Ovary (tissue), 10 donors: ENCODE measurements at regions of chr11 and their contacts with region 1.

Region 1: DNA sequence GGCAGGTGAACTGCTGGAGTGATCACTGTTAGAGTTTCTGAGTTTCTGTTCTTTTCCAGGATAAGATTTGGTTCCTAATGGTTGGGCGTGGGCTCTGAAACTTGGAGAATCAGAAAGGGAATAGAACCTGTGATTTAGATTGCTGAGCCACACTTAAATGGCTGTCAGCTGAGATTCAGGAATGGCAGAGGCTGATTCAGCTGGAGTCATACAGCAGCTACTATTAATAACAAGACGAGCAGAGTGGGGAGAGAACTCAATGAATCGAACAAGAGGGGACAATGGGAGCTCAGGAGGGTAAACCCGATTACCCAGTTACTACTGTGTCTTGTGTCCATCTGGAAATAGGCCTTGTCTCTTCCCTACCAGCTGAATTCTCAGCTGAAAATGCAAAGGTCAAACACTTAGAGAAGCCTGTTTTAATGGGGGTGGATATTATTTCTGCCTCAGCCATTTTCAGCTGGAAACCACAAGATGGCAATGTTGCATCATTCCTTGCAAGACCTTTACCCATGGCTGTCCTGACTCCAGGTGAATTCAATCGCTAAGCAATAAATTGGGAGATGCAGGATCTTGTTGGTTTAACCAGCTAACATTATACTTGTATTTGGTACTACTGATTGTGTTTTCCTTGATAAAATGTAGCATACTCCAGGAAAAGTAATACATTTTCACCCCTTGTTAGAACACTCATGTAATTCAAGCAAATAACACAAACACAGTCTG is 104.5 kb upstream of the RAG2 start:
- DNase-seq: peak in 2 of 5 donors; percentile 16
- H3K4me3 ChIP-seq: no peak overlapping the region
- H3K27ac ChIP-seq: no peak overlapping the region
- H3K4me1 ChIP-seq: no peaks in the 10 kb centered on the region
- H3K27me3 ChIP-seq: no peaks in the 10 kb centered on the region
- CTCF ChIP-seq: peak; percentile 48 to 77 (median 77)
- EP300 ChIP-seq: no peak
- POLR2A ChIP-seq: no peak

Region 2: GRCh38 chr11:36746886-36747710 is 44.6 kb after region 1 on chr11:
- intact Hi-C with region 1: loop called in 1 of 4 experiments (anchors 5 kb)
- DNase-seq: peak; percentile 62 to 83 (median 77)
- H3K4me3 ChIP-seq: no peak overlapping the region
- H3K27ac ChIP-seq: no peak overlapping the region
- H3K4me1 ChIP-seq: no peaks in the 10 kb centered on the region
- H3K27me3 ChIP-seq: no peaks in the 10 kb centered on the region
- CTCF ChIP-seq: peak; percentile 57 to 83 (median 75)
- EP300 ChIP-seq: no peak
- POLR2A ChIP-seq: no peak

Region 3: DNA sequence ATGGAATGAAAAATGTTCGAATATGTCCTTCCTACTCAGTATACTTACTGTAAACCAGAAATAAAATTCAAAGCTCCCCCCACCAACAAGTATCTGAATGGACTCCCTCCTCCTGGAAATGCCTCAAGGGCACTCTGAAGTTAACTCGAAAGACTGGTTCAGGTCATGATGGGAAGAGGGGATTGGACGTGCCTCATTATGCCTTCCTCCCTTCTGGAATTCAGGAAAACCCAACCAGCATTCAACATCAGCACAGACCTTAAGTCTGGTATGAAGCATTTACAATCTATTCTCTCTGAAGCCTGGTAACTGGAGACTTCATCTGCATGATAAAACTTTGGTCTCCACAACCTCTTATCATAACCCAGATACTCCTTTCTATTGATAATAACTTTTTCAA is 323.8 kb after region 1 on chr11:
- intact Hi-C with region 1: no loop called
- DNase-seq: no peak
- H3K4me3 ChIP-seq: no peak overlapping the region
- H3K27ac ChIP-seq: no peak overlapping the region
- H3K4me1 ChIP-seq: no peaks in the 10 kb centered on the region
- H3K27me3 ChIP-seq: no peaks in the 10 kb centered on the region
- CTCF ChIP-seq: no peak
- EP300 ChIP-seq: no peak
- POLR2A ChIP-seq: no peak